CD14-positive monocyte (primary cell): ENCODE measurements at regions of chr2 and their contacts with region 1.

Region 1: DNA sequence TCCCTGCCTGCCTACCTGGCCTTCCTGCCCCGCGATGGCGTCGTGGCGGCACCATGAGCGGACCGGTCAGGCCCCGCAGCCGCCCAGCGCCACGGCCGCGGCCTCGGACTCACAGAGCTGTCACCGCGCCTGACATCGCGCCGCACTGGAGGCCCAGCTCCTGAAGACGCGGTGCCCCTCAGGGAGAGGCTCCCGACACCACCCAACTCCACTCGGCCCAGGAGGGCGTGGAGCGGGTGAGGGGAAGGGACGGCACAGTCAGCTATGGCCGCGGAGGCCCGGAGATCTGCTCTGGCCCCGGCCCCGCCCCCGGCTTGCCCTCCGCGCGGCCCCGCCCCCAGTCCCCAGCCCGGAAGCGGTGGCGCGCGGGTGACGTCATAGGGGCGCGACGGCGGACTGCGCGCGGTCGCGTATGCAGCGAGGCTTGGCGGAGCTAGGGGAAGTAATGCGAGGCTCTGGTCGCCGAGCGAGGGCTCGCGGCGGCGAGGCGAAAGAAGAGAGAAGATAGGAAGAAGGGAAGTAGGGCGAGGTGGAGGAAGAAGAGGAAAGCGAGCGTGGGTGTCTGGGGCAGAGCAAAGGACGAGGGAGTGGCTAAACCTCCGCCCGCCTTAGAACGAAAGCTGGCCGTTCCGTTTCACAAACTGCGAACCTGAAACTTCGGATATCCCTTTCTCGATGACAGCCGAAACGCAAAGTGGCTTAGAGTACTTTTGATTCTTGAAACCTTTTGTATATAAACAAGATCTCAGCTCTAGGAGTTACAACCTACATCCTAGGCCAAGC is at the start of gene SLC35F5:
- DNase-seq: peak; percentile 92 to 96 (median 96)
- H3K4me3 ChIP-seq: peak within 1 kb of the TSS; percentile 77 to 95 (median 88)
- H3K4me3 Mint-ChIP-seq: peak within 1 kb of the TSS; percentile 94 to 96
- H3K27ac ChIP-seq: peak within 1 kb of the TSS; percentile 93 to 97
- H3K27ac Mint-ChIP-seq: peak within 1 kb of the TSS; percentile 97 to 100 (median 98)
- H3K4me1 ChIP-seq: peaks cover 13 to 25% of the 10 kb centered on the region in 2 donors
- H3K4me1 Mint-ChIP-seq: peaks cover 19% of the 10 kb centered on the region
- H3K27me3 ChIP-seq: no peaks in the 10 kb centered on the region
- H3K27me3 Mint-ChIP-seq: peaks cover 0 to 2% (median 0%) of the 10 kb centered on the region in 3 donors
- CTCF ChIP-seq: no peak
- polyA plus RNA-seq, gene SLC35F5: 11.7 to 18.2 (median 13.6) TPM

Region 2: DNA sequence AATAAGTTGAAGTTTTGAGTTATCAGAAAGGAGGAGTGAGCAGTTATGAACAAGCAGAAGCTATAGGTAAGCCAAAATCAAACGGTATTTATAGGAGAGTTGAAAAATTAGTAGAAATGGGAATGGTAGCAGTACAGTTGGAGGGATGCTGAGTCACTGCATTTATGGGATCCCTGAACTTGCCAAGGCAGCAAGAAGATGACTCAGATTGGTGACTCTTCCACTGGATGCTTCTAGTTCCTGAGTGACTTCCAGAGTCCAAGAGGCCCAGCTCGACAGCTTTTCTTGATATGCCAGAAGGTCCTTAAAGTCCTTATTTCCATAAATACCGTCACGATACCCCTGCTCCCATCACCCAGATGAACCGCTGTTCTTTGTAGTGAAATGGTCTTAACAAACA is 102.2 kb after region 1 on chr2:
- intact Hi-C with region 1: loop called in 1 of 2 experiments (anchors 2 kb)
- DNase-seq: peak; percentile 51 to 92 (median 80)
- H3K4me3 ChIP-seq: peak overlapping the region in 1 of 3 experiments; percentile 52
- H3K4me3 Mint-ChIP-seq: peak overlapping the region in 1 of 2 donors; percentile 11
- H3K27ac ChIP-seq: peak overlapping the region; percentile 63 to 85
- H3K27ac Mint-ChIP-seq: peak overlapping the region; percentile 80 to 96 (median 92)
- H3K4me1 ChIP-seq: peaks cover 70 to 86% of the 10 kb centered on the region in 2 donors
- H3K4me1 Mint-ChIP-seq: peaks cover 70% of the 10 kb centered on the region
- H3K27me3 ChIP-seq: no peaks in the 10 kb centered on the region
- H3K27me3 Mint-ChIP-seq: peaks cover 0 to 1% (median 0%) of the 10 kb centered on the region in 3 donors
- CTCF ChIP-seq: no peak

Region 3: DNA sequence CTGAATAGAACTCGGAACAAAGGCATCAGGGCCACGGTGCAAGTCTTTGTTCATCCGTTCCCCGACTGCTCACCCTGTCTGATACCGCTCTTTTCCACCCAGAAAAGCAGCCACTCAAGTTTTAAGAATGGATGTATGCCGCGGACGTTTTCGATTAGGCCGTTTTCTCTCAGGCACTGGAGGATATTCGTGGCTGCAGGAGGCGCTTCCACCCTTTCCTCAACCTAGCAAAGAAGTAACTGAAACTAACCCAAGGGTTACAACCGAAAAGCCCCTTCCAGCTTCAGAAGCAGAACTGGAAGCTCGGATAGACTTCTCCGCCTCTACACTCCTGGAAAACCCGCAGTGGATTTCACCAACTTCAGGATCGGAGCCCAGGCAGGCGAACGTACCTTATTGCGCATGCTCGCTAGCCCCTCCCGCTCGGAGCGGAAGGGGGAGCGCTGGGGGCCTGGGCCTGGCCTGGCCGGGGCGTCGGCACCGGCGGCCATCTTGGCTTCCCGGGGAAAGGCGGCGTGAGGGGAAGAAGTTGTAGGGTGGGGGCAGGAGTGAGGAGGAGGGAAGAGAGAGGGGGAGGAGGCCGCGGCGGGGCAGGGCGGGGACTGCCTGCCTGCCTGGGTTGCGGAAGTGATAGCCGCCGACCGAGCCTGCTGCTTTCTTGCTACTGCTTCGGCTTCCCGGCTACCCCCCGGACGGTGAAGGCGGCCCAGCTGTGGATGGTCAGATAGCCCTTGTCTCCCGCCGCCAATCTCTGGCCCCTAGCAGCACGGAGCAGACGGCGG is 133.1 kb after region 1 on chr2 and contains the start of gene ACTR3:
- intact Hi-C with region 1: loop called in 1 of 2 experiments (anchors 10 kb)
- DNase-seq: peak; percentile 98 to 100 (median 99)
- H3K4me3 ChIP-seq: peak within 1 kb of the TSS; percentile 89 to 96 (median 91)
- H3K4me3 Mint-ChIP-seq: peak within 1 kb of the TSS; percentile 96 to 100
- H3K27ac ChIP-seq: peak within 1 kb of the TSS; percentile 95 to 98
- H3K27ac Mint-ChIP-seq: peak within 1 kb of the TSS; percentile 96 to 100 (median 99)
- H3K4me1 ChIP-seq: peaks cover 69 to 77% of the 10 kb centered on the region in 2 donors
- H3K4me1 Mint-ChIP-seq: peaks cover 70% of the 10 kb centered on the region
- H3K27me3 ChIP-seq: no peaks in the 10 kb centered on the region
- H3K27me3 Mint-ChIP-seq: peaks cover 0 to 2% (median 0%) of the 10 kb centered on the region in 3 donors
- CTCF ChIP-seq: no peak
- polyA plus RNA-seq, gene ACTR3: 103 to 557 (median 464) TPM

Region 4: DNA sequence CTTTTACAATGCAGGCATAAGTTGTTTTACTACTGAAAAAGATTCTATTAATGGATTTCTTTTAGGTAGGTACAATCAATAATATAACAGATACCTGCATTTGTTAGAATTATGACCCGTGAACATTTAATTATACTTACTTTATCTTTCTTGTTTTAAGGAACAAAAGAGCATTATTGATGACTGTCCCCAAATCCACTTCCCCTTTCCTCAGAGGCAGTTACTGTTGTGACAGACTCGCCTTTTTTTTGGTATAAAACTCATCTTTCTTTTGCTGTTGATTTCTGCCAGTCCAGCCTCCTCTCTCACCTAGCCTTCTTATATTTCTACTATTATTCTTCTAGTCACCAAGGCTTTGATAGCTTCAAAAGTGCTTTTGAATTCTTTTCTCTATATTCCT is 145.4 kb after region 1 on chr2:
- intact Hi-C with region 1: loop called (anchors 10 kb)
- DNase-seq: peak; percentile 67 to 83 (median 82)
- H3K4me3 ChIP-seq: peak overlapping the region in 1 of 3 experiments; percentile 34
- H3K4me3 Mint-ChIP-seq: no peak overlapping the region
- H3K27ac ChIP-seq: peak overlapping the region in 1 of 2 donors; percentile 71
- H3K27ac Mint-ChIP-seq: peak overlapping the region; percentile 66 to 91 (median 83)
- H3K4me1 ChIP-seq: peaks cover 55 to 97% of the 10 kb centered on the region in 2 donors
- H3K4me1 Mint-ChIP-seq: peaks cover 89% of the 10 kb centered on the region
- H3K27me3 ChIP-seq: no peaks in the 10 kb centered on the region
- H3K27me3 Mint-ChIP-seq: peaks cover 0 to 2% (median 0%) of the 10 kb centered on the region in 3 donors
- CTCF ChIP-seq: no peak

Region 5: GRCh38 chr2:113959202-113959601 is 202.7 kb after region 1 on chr2:
- intact Hi-C with region 1: loop called in 1 of 2 experiments (anchors 10 kb)
- DNase-seq: no peak
- H3K4me3 ChIP-seq: no peak overlapping the region
- H3K4me3 Mint-ChIP-seq: no peak overlapping the region
- H3K27ac ChIP-seq: peak overlapping the region in 1 of 2 donors; percentile 32
- H3K27ac Mint-ChIP-seq: no peak overlapping the region
- H3K4me1 ChIP-seq: no peaks in the 10 kb centered on the region
- H3K4me1 Mint-ChIP-seq: no peaks in the 10 kb centered on the region
- H3K27me3 ChIP-seq: no peaks in the 10 kb centered on the region
- H3K27me3 Mint-ChIP-seq: no peaks in the 10 kb centered on the region
- CTCF ChIP-seq: no peak